Psoas muscle (tissue), 8 donors: ENCODE measurements at regions of chr10 and their contacts with region 1.

Region 1: GRCh38 chr10:52644373-52645186 is 128.0 kb downstream of the MBL2 start:
- DNase-seq: no peak
- ATAC-seq: peak in 3 of 4 donors; percentile 57 to 94 (median 86)
- H3K4me3 ChIP-seq: no peak overlapping the region
- H3K27ac ChIP-seq: no peak overlapping the region
- H3K4me1 ChIP-seq: peaks cover 5% of the 10 kb centered on the region
- H3K27me3 ChIP-seq: no peaks in the 10 kb centered on the region
- CTCF ChIP-seq: peak; percentile 68

Region 2: GRCh38 chr10:52621635-52622079 is 22.9 kb before region 1 on chr10:
- intact Hi-C with region 1: no loop called
- DNase-seq: no peak
- ATAC-seq: no peak
- H3K4me3 ChIP-seq: no peak overlapping the region
- H3K27ac ChIP-seq: no peak overlapping the region
- H3K4me1 ChIP-seq: no peaks in the 10 kb centered on the region
- H3K27me3 ChIP-seq: peaks cover 0 to 2% (median 0%) of the 10 kb centered on the region in 3 donors
- CTCF ChIP-seq: no peak

Region 3: DNA sequence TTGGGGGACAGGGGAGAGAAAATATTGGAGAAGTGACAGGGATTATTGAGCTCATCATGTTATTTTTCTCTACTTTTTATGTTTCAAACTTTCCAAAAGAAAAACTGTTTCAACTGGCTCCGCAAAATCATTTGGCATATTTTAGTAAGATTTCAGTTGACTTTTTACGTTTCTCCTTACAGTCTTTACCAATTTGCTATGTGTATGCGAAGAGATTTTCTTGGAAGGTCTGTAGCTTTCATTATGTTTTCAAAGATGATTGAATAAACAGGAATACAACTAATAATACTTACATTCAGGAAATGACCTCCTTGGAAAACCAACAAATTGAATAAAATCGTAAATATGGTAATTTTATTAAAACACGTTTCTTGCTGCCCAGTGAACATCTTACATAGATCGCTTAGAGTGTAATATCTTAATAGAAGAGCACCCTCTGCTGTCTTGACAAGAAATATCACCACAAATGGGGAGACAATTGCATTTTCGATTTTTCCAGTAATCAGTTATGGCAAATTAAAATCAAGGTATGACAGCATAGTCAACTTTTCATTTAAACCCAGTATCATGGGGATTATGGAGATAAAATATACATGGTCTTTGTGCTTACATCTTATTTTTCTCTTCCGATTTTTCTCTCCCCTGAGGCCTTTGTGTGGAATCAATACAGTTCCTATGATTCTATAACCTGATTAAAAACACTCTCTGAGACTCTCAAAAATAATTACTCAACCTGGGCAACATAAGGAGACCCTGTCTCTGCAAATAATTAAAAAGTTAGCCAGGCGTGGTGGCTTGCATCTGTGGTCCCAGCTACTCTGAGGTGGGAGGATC is 84.9 kb after region 1 on chr10:
- intact Hi-C with region 1: loop called (anchors 1 to 2 kb)
- DNase-seq: no peak
- ATAC-seq: peak in 2 of 4 donors; percentile 54 to 71
- H3K4me3 ChIP-seq: no peak overlapping the region
- H3K27ac ChIP-seq: no peak overlapping the region
- H3K4me1 ChIP-seq: no peaks in the 10 kb centered on the region
- H3K27me3 ChIP-seq: no peaks in the 10 kb centered on the region
- CTCF ChIP-seq: peak; percentile 39

Region 4: GRCh38 chr10:52779541-52780390 is 135.2 kb after region 1 on chr10:
- intact Hi-C with region 1: loop called in 1 of 2 experiments (anchors 5 kb)
- DNase-seq: peak; percentile 42 to 72
- ATAC-seq: peak; percentile 37 to 78 (median 70)
- H3K4me3 ChIP-seq: no peak overlapping the region
- H3K27ac ChIP-seq: no peak overlapping the region
- H3K4me1 ChIP-seq: no peaks in the 10 kb centered on the region
- H3K27me3 ChIP-seq: no peaks in the 10 kb centered on the region
- CTCF ChIP-seq: peak; percentile 73